ENCODE measurements at regions of chrX and their contacts with region 1.

Region 1: GRCh38 chrX:103347682-103348397 is 8.5 kb upstream of the TCEAL9 start:
- DNase-seq: no peak
- ATAC-seq: no peak
- H3K4me3 ChIP-seq: no peak overlapping the region
- H3K27ac ChIP-seq: no peak overlapping the region
- H3K4me1 ChIP-seq: no peaks in the 10 kb centered on the region
- H3K27me3 ChIP-seq: no peaks in the 10 kb centered on the region

Region 2: GRCh38 chrX:103464774-103465117 is 116.9 kb after region 1 on chrX:
- intact Hi-C with region 1: loop called (anchors 2 to 5 kb)
- DNase-seq: peak; percentile 68 to 86
- ATAC-seq: peak; percentile 91
- H3K4me3 ChIP-seq: peak overlapping the region in 1 of 2 donors; percentile 33
- H3K27ac ChIP-seq: no peak overlapping the region
- H3K4me1 ChIP-seq: no peaks in the 10 kb centered on the region
- H3K27me3 ChIP-seq: no peaks in the 10 kb centered on the region

Region 3: GRCh38 chrX:104045642-104046041 is 697.8 kb after region 1 on chrX:
- intact Hi-C with region 1: no loop called
- DNase-seq: no peak
- ATAC-seq: no peak
- H3K4me3 ChIP-seq: no peak overlapping the region
- H3K27ac ChIP-seq: no peak overlapping the region
- H3K4me1 ChIP-seq: no peaks in the 10 kb centered on the region
- H3K27me3 ChIP-seq: no peaks in the 10 kb centered on the region